Caco-2 (cell line): ENCODE measurements at regions of chr14 and their contacts with region 1.

Region 1: GRCh38 chr14:83894568-83894967 is 1635.4 kb upstream of the FLRT2 start:
- DNase-seq: no peak
- H3K4me3 ChIP-seq: no peak overlapping the region
- H3K4me3 Mint-ChIP-seq: no peak overlapping the region
- H3K27ac Mint-ChIP-seq: no peak overlapping the region
- H3K4me1 ChIP-seq: no peaks in the 10 kb centered on the region
- H3K4me1 Mint-ChIP-seq: no peaks in the 10 kb centered on the region
- H3K27me3 ChIP-seq: no peaks in the 10 kb centered on the region
- H3K27me3 Mint-ChIP-seq: no peaks in the 10 kb centered on the region
- CTCF ChIP-seq: no peak

Region 2: GRCh38 chr14:83923842-83924241 is 29.3 kb after region 1 on chr14:
- CTCF ChIA-PET with region 1: no interaction called
- POLR2A ChIA-PET with region 1: no interaction called
- intact Hi-C with region 1: no loop called
- DNase-seq: no peak
- H3K4me3 ChIP-seq: no peak overlapping the region
- H3K4me3 Mint-ChIP-seq: no peak overlapping the region
- H3K27ac Mint-ChIP-seq: no peak overlapping the region
- H3K4me1 ChIP-seq: no peaks in the 10 kb centered on the region
- H3K4me1 Mint-ChIP-seq: no peaks in the 10 kb centered on the region
- H3K27me3 ChIP-seq: no peaks in the 10 kb centered on the region
- H3K27me3 Mint-ChIP-seq: no peaks in the 10 kb centered on the region
- CTCF ChIP-seq: no peak

Region 3: GRCh38 chr14:84025106-84026012 is 130.8 kb after region 1 on chr14:
- CTCF ChIA-PET with region 1: no interaction called
- POLR2A ChIA-PET with region 1: no interaction called
- intact Hi-C with region 1: loop called (anchors 5 kb)
- DNase-seq: no peak
- H3K4me3 ChIP-seq: no peak overlapping the region
- H3K4me3 Mint-ChIP-seq: no peak overlapping the region
- H3K27ac Mint-ChIP-seq: no peak overlapping the region
- H3K4me1 ChIP-seq: no peaks in the 10 kb centered on the region
- H3K4me1 Mint-ChIP-seq: no peaks in the 10 kb centered on the region
- H3K27me3 ChIP-seq: no peaks in the 10 kb centered on the region
- H3K27me3 Mint-ChIP-seq: no peaks in the 10 kb centered on the region
- CTCF ChIP-seq: no peak